Posterior vena cava (tissue), 2 donors: ENCODE measurements at regions of chr19 and their contacts with region 1.

Region 1: GRCh38 chr19:55579766-55580621 is 654 bp downstream of the ZNF579 start:
- DNase-seq: no peak

Region 2: GRCh38 chr19:55160128-55160985 is 419.6 kb before region 1 on chr19:
- intact Hi-C with region 1: no loop called
- DNase-seq: peak; percentile 94

Region 3: GRCh38 chr19:55526216-55527196 is 53.5 kb before region 1 on chr19:
- intact Hi-C with region 1: loop called in 1 of 2 experiments (anchors 5 kb)
- DNase-seq: peak; percentile 76

Region 4: GRCh38 chr19:55546822-55547616 is 33.0 kb before region 1 on chr19:
- intact Hi-C with region 1: no loop called
- DNase-seq: peak; percentile 92